CD8-positive, alpha-beta memory T cell (primary cell): ENCODE measurements at regions of chr11 and their contacts with region 1.

Region 1: DNA sequence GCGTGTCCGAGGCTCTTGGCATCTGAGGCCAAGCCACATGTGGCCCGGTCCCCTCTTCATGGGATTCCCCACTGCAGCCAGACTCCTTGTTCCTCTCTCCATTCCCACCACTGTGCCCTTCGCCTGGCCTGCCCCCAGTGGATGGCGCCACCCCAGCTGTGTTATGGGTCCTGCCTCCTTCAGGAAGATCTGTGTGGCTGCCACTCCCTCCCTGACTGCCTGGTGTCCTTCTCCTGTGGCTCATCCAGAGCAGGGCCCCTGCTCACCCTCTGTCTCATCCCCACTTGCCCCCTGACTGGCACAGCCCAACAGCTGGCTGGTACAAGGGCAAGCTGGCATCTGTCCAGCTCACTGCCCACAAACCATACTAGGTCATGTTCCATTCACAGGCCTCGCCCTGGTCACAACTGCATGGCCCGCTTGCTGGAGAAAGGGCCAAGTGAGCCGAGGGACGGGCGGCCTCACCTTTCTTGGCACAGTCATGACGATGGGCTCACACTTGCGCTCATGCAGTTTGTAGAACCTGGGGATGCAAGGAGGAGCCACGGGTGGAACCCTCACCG is 1.9 kb upstream of the PTPRCAP start:
- DNase-seq: peak in 2 of 5 donors; percentile 32 to 44
- H3K4me3 ChIP-seq: peak overlapping the region; percentile 95
- H3K4me3 Mint-ChIP-seq: peak overlapping the region; percentile 96 to 99 (median 98)
- H3K27ac ChIP-seq: peak overlapping the region; percentile 24
- H3K27ac Mint-ChIP-seq: peak overlapping the region; percentile 86 to 99 (median 94)
- H3K4me1 ChIP-seq: peaks cover 53% of the 10 kb centered on the region
- H3K4me1 Mint-ChIP-seq: peaks cover 45 to 77% (median 46%) of the 10 kb centered on the region in 3 donors
- H3K27me3 ChIP-seq: no peaks in the 10 kb centered on the region
- H3K27me3 Mint-ChIP-seq: peaks cover 0 to 1% of the 10 kb centered on the region in 2 donors

Region 2: GRCh38 chr11:67312187-67313103 is 127.0 kb before region 1 on chr11:
- CTCF ChIA-PET with region 1: no interaction called
- POLR2A ChIA-PET with region 1: no interaction called
- DNase-seq: peak in 3 of 5 donors; percentile 29 to 47 (median 37)
- H3K4me3 ChIP-seq: peak overlapping the region; percentile 25
- H3K4me3 Mint-ChIP-seq: peak overlapping the region; percentile 38 to 71 (median 57)
- H3K27ac ChIP-seq: peak overlapping the region; percentile 53
- H3K27ac Mint-ChIP-seq: peak overlapping the region; percentile 85 to 99 (median 94)
- H3K4me1 ChIP-seq: peaks cover 28% of the 10 kb centered on the region
- H3K4me1 Mint-ChIP-seq: peaks cover 32 to 49% (median 44%) of the 10 kb centered on the region in 3 donors
- H3K27me3 ChIP-seq: no peaks in the 10 kb centered on the region
- H3K27me3 Mint-ChIP-seq: peaks cover 0 to 3% of the 10 kb centered on the region in 2 donors

Region 3: GRCh38 chr11:67353317-67354074 is 85.9 kb before region 1 on chr11 and contains the start of gene POLD4:
- CTCF ChIA-PET with region 1: interaction called, 9 read pairs
- POLR2A ChIA-PET with region 1: interaction called, 14 read pairs
- DNase-seq: peak; percentile 92 to 97 (median 96)
- H3K4me3 ChIP-seq: peak within 1 kb of the TSS; percentile 96
- H3K4me3 Mint-ChIP-seq: peak within 1 kb of the TSS; percentile 92 to 98 (median 95)
- H3K27ac ChIP-seq: peak within 1 kb of the TSS; percentile 96
- H3K27ac Mint-ChIP-seq: peak within 1 kb of the TSS; percentile 97 to 99 (median 98)
- H3K4me1 ChIP-seq: peaks cover 50% of the 10 kb centered on the region
- H3K4me1 Mint-ChIP-seq: peaks cover 35 to 69% (median 55%) of the 10 kb centered on the region in 3 donors
- H3K27me3 ChIP-seq: no peaks in the 10 kb centered on the region
- H3K27me3 Mint-ChIP-seq: no peaks in the 10 kb centered on the region
- total RNA-seq, gene POLD4: 32.3 to 37.8 TPM

Region 4: DNA sequence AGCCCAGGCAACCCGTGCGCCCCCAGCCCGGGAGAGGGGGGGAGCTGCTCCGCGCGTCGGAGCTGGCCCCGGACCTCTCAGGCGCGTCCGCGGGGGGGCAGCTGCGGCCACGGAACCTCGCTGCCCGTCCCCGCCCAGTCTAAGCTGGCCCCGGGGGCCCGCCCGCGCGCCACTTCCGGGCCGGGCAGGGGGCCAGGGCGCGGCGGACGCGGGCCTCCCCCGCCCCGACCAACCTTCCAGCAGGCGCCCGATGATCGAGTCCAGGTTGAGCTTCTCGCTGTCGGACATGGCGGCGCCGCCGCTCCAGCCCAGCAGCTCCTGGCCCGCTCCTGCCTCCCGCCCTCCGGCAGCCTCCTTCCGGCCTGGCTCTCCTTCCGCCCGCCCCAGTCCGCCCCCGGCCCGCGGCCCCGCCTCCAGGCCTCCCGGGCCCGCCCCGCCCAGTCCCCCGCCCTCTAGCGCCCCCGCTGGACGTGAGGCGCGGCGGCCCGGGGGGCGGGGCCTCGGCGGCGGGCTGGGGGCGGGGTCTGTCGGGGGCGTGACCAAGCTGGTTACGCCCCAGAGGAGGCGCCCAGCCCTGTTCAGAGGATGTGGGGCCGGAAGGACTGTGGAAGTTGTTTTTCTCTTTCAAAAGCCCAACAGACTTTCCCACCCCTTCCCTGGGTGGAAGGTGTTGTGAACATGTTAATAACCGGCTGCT is 37.8 kb before region 1 on chr11 and contains the start of gene PPP1CA:
- CTCF ChIA-PET with region 1: interaction called, 59 read pairs
- POLR2A ChIA-PET with region 1: interaction called, 203 read pairs
- DNase-seq: peak; percentile 87 to 93 (median 92)
- H3K4me3 ChIP-seq: peak within 1 kb of the TSS; percentile 88
- H3K4me3 Mint-ChIP-seq: peak within 1 kb of the TSS; percentile 89 to 99 (median 95)
- H3K27ac ChIP-seq: peak within 1 kb of the TSS; percentile 87
- H3K27ac Mint-ChIP-seq: peak within 1 kb of the TSS; percentile 78 to 98 (median 93)
- H3K4me1 ChIP-seq: peaks cover 74% of the 10 kb centered on the region
- H3K4me1 Mint-ChIP-seq: peaks cover 40 to 82% (median 53%) of the 10 kb centered on the region in 3 donors
- H3K27me3 ChIP-seq: no peaks in the 10 kb centered on the region
- H3K27me3 Mint-ChIP-seq: no peaks in the 10 kb centered on the region
- total RNA-seq, gene PPP1CA: 338 to 357 TPM

Region 5: GRCh38 chr11:67420646-67421420 is 18.6 kb before region 1 on chr11:
- CTCF ChIA-PET with region 1: interaction called, 4 read pairs
- POLR2A ChIA-PET with region 1: interaction called, 36 read pairs
- DNase-seq: peak; percentile 97 to 99 (median 98)
- H3K4me3 ChIP-seq: peak overlapping the region; percentile 58
- H3K4me3 Mint-ChIP-seq: peak overlapping the region; percentile 70 to 90 (median 83)
- H3K27ac ChIP-seq: peak overlapping the region; percentile 51
- H3K27ac Mint-ChIP-seq: peak overlapping the region; percentile 75 to 95 (median 88)
- H3K4me1 ChIP-seq: peaks cover 49% of the 10 kb centered on the region
- H3K4me1 Mint-ChIP-seq: peaks cover 43 to 62% (median 51%) of the 10 kb centered on the region in 3 donors
- H3K27me3 ChIP-seq: no peaks in the 10 kb centered on the region
- H3K27me3 Mint-ChIP-seq: peaks cover 0 to under 1% of the 10 kb centered on the region in 2 donors

Region 6: GRCh38 chr11:67452141-67452952 is 12.9 kb after region 1 on chr11 and contains the start of gene GPR152:
- CTCF ChIA-PET with region 1: interaction called, 4 read pairs
- POLR2A ChIA-PET with region 1: interaction called, 15 read pairs
- DNase-seq: no peak
- H3K4me3 ChIP-seq: no peak within 1 kb of the TSS
- H3K4me3 Mint-ChIP-seq: no peak within 1 kb of the TSS
- H3K27ac ChIP-seq: no peak within 1 kb of the TSS
- H3K27ac Mint-ChIP-seq: no peak within 1 kb of the TSS
- H3K4me1 ChIP-seq: peaks cover 29% of the 10 kb centered on the region
- H3K4me1 Mint-ChIP-seq: peaks cover 9 to 25% (median 14%) of the 10 kb centered on the region in 3 donors
- H3K27me3 ChIP-seq: no peaks in the 10 kb centered on the region
- H3K27me3 Mint-ChIP-seq: peaks cover 0 to 3% of the 10 kb centered on the region in 2 donors
- total RNA-seq, gene GPR152: not detected

Region 7: DNA sequence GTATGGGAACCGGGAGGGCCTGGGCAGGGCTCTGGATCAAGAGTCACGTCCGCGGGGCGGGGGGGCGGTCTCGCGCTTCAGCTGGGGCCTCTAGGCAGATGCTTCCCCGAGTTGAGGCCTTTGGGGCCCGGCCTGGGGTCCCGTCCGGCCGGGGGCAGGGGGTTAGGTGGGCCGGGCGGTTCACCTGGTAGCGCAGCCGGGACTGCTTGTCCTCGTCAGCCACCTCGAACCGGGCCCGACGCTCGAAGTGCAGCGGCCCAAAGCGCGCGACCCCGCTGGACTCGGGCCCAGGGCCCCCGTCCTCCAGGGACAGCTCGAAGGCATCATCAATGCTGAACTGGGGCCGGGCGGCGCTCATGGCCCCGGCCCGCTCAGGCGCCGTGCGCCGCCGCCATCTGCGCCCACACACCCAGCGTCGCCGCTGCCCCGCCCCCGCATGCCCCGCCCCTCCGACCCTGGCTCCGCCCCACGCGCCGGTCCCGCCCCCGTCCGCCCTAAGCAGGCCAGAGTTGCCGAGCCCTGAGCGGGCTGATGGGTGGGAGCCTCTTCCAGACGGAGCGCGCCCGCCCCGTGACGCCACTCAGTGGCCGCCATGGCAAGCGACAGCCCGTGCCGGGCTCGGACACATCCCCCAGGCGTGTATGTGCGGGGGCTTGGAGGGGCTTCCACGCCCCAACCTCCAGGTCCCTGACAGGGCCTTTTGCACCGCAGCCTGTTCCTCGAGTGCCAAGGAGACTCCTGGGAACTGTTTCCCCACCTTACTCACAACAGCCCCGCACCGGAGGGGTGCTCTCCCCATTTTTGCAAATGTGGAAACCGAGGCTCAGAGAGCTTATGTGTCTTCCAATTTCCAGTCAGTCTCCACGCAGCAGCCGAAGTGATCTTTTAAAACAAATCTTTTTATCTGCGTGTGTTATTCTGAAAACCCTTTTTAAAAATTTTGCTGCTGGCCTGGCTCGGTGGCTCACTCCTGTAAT is 29.7 kb after region 1 on chr11 and contains the start of gene TMEM134:
- CTCF ChIA-PET with region 1: interaction called, 22 read pairs
- POLR2A ChIA-PET with region 1: interaction called, 38 read pairs
- DNase-seq: peak; percentile 86 to 95 (median 87)
- H3K4me3 ChIP-seq: peak within 1 kb of the TSS; percentile 74
- H3K4me3 Mint-ChIP-seq: peak within 1 kb of the TSS; percentile 87 to 92 (median 88)
- H3K27ac ChIP-seq: peak within 1 kb of the TSS; percentile 70
- H3K27ac Mint-ChIP-seq: peak within 1 kb of the TSS; percentile 64 to 94 (median 88)
- H3K4me1 ChIP-seq: peaks cover 34% of the 10 kb centered on the region
- H3K4me1 Mint-ChIP-seq: peaks cover 11 to 42% (median 29%) of the 10 kb centered on the region in 3 donors
- H3K27me3 ChIP-seq: no peaks in the 10 kb centered on the region
- H3K27me3 Mint-ChIP-seq: no peaks in the 10 kb centered on the region
- total RNA-seq, gene TMEM134: 49.6 to 57.9 TPM

Region 8: GRCh38 chr11:67505605-67506396 is 66.4 kb after region 1 on chr11:
- CTCF ChIA-PET with region 1: interaction called, 5 read pairs
- POLR2A ChIA-PET with region 1: interaction called, 11 read pairs
- DNase-seq: peak; percentile 88 to 93 (median 90)
- H3K4me3 ChIP-seq: peak overlapping the region; percentile 66
- H3K4me3 Mint-ChIP-seq: peak overlapping the region; percentile 83 to 93 (median 91)
- H3K27ac ChIP-seq: peak overlapping the region; percentile 91
- H3K27ac Mint-ChIP-seq: peak overlapping the region; percentile 94 to 99 (median 98)
- H3K4me1 ChIP-seq: peaks cover 42% of the 10 kb centered on the region
- H3K4me1 Mint-ChIP-seq: peaks cover 43 to 65% (median 45%) of the 10 kb centered on the region in 3 donors
- H3K27me3 ChIP-seq: no peaks in the 10 kb centered on the region
- H3K27me3 Mint-ChIP-seq: peaks cover 0 to 6% of the 10 kb centered on the region in 2 donors